CD4-positive, alpha-beta memory T cell (primary cell): ENCODE measurements at regions of chr2 and their contacts with region 1.

Region 1: DNA sequence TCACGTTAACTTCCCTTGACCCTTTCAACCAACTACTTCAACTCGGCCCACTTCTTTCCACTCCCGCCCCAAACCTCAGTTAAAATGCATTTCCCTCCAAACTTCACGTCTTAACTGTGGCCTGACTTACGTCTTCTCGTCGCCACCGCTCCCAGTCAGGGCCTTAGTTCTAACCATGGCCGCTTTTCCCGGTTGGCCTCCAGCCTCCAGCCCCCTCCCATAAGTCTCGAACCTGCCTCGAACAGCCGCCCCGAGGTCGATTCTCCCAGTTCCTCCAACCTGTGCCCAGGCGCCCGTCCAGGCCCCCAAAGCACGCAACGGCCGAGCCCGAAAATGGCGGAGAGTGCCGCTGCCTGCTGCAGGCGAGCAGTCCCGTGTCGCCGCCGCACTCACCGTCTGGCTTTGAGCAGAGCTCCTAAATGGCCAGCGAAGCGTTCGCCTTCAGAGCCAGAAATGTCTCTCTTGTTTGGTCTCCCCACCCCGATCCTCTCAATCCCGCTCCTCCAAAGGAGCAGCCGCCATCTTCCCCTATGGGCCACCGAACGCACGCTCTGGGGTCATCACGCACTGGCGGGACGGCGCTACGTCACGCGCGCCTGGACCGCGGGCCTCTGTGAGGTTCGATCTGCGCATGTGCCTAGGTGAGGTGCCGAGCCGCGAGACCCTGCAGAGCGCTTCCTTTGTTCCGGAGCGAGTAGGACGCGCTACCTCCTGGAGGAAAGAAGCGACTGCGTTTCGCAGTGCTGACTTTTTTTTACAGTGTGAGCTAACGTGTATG is at the start of gene WDR33:
- DNase-seq: peak; percentile 92 to 95 (median 93)
- H3K4me3 ChIP-seq: peak within 1 kb of the TSS; percentile 68 to 98
- H3K4me3 Mint-ChIP-seq: peak within 1 kb of the TSS; percentile 93 to 99 (median 98)
- H3K27ac ChIP-seq: peak within 1 kb of the TSS; percentile 96
- H3K27ac Mint-ChIP-seq: peak within 1 kb of the TSS; percentile 98 to 100 (median 99)
- H3K4me1 ChIP-seq: peaks cover 47% of the 10 kb centered on the region
- H3K4me1 Mint-ChIP-seq: peaks cover 34 to 59% (median 48%) of the 10 kb centered on the region in 4 donors
- H3K27me3 ChIP-seq: no peaks in the 10 kb centered on the region
- H3K27me3 Mint-ChIP-seq: peaks cover 0 to 4% of the 10 kb centered on the region in 2 donors
- total RNA-seq, gene WDR33: 84.9 to 86.2 TPM

Region 2: GRCh38 chr2:126877861-126878565 is 932.8 kb before region 1 on chr2:
- CTCF ChIA-PET with region 1: no interaction called
- POLR2A ChIA-PET with region 1: no interaction called
- intact Hi-C with region 1: no loop called
- DNase-seq: no peak
- H3K4me3 ChIP-seq: no peak overlapping the region
- H3K4me3 Mint-ChIP-seq: no peak overlapping the region
- H3K27ac ChIP-seq: no peak overlapping the region
- H3K27ac Mint-ChIP-seq: no peak overlapping the region
- H3K4me1 ChIP-seq: no peaks in the 10 kb centered on the region
- H3K4me1 Mint-ChIP-seq: no peaks in the 10 kb centered on the region
- H3K27me3 ChIP-seq: no peaks in the 10 kb centered on the region
- H3K27me3 Mint-ChIP-seq: peaks cover 0 to 3% of the 10 kb centered on the region in 2 donors

Region 3: GRCh38 chr2:127829845-127830246 is 19.0 kb after region 1 on chr2:
- CTCF ChIA-PET with region 1: no interaction called
- POLR2A ChIA-PET with region 1: interaction called, 19 read pairs
- intact Hi-C with region 1: loop called (anchors 1 kb)
- DNase-seq: peak; percentile 73 to 90 (median 78)
- H3K4me3 ChIP-seq: no peak overlapping the region
- H3K4me3 Mint-ChIP-seq: peak overlapping the region in 7 of 8 donors; percentile 6 to 75 (median 53)
- H3K27ac ChIP-seq: peak overlapping the region; percentile 35
- H3K27ac Mint-ChIP-seq: peak overlapping the region; percentile 82 to 95 (median 91)
- H3K4me1 ChIP-seq: peaks cover 24% of the 10 kb centered on the region
- H3K4me1 Mint-ChIP-seq: peaks cover 19 to 40% (median 26%) of the 10 kb centered on the region in 4 donors
- H3K27me3 ChIP-seq: no peaks in the 10 kb centered on the region
- H3K27me3 Mint-ChIP-seq: no peaks in the 10 kb centered on the region

Region 4: DNA sequence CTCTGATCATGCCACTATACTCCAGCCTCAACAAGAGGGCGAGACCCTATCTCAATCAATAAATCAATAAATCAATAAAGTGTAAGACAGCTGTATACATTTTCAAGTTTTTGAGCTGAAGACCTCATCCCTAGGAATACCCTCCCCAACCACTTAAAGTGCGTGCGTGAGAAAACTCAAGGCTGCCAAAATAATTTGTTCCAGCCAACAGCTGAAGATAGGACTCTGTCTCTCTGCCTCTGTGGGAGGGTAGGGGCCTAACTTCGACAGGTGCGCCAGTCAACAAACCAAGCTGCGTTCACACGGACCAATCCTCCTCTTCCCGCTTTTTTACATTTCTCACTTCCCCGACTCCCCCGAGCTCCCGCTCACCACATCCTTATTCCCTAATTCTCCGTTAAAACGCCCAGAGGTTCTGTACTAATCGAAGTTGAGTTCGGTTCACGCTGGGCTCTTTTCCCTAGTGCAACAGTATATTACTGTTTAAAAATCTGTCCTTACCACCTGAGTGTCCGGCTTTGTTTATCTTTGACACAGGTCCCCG is 46.5 kb after region 1 on chr2:
- CTCF ChIA-PET with region 1: no interaction called
- POLR2A ChIA-PET with region 1: interaction called, 11 read pairs
- intact Hi-C with region 1: loop called (anchors 1 kb)
- DNase-seq: peak in 1 of 5 donors; percentile 11
- H3K4me3 ChIP-seq: peak overlapping the region; percentile 70 to 78
- H3K4me3 Mint-ChIP-seq: peak overlapping the region; percentile 89 to 98 (median 93)
- H3K27ac ChIP-seq: peak overlapping the region; percentile 80
- H3K27ac Mint-ChIP-seq: peak overlapping the region; percentile 73 to 96 (median 93)
- H3K4me1 ChIP-seq: peaks cover 53% of the 10 kb centered on the region
- H3K4me1 Mint-ChIP-seq: peaks cover 26 to 62% (median 41%) of the 10 kb centered on the region in 4 donors
- H3K27me3 ChIP-seq: no peaks in the 10 kb centered on the region
- H3K27me3 Mint-ChIP-seq: no peaks in the 10 kb centered on the region